K562 (cell line): ENCODE measurements at regions of chr3 and their contacts with region 1.

Region 1: DNA sequence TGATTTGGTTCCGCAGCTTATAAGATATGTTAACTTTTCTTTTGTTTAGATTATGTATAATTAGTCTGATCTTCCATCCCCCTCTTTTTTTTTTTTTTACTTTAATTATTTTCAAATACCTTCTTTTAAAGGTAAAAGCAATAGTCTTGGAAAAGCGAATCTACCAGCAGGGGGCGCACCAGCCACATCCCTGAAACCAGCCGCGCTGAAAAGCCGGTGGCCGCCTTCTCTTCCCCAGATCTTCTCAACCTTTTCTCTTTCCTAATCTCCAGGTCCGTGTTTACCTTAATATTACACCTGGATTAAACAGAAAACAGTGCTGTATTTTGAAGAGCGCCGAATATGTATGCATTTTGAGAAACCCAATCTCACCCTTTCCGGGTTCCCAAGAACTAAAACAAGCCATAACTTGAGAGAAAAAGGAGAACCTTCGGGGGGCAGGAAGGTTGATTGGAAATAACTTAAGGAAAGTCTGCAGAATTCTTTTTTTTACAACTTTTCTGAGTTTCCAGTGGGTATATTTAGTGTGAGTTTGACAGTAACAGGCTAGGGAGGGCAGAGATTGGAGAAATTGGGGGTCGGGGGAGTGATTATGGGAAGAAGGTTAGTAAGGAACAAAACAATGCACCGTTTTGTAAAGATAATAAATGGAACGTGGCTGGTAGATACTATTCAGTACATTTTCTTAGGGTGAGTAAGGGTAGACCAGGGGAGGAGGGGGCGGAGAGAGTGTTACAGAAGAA is 2.0 kb upstream of the SOX2 start:
- DNase-seq: peak; percentile 51 to 72 (median 56)
- ATAC-seq: peak; percentile 82
- H3K4me3 ChIP-seq: no peak overlapping the region
- H3K27ac ChIP-seq: no peak overlapping the region
- H3K4me1 ChIP-seq: peaks cover 0 to 4% of the 10 kb centered on the region in 2 experiments; a peak in 2 of 5 replicates
- H3K27me3 ChIP-seq: peaks cover 2 to 16% of the 10 kb centered on the region in 2 experiments; a peak in 3 of 5 replicates
- CTCF ChIP-seq: peak; percentile 60 to 77 (median 67)
- EP300 ChIP-seq: no peak
- POLR2A ChIP-seq: no peak
- RAD21 ChIP-seq: peak; percentile 70 to 79

Region 2: GRCh38 chr3:181899702-181900101 is 190.0 kb after region 1 on chr3:
- CTCF ChIA-PET with region 1: no interaction called
- POLR2A ChIA-PET with region 1: no interaction called
- in situ Hi-C with region 1: no loop called
- intact Hi-C with region 1: loop called (anchors 1 kb)
- DNase-seq: peak in 1 of 4 experiments; percentile 1
- ATAC-seq: no peak
- H3K4me3 ChIP-seq: no peak overlapping the region
- H3K27ac ChIP-seq: no peak overlapping the region
- H3K4me1 ChIP-seq: no peaks in the 10 kb centered on the region; a peak in 1 of 5 replicates
- H3K27me3 ChIP-seq: no peaks in the 10 kb centered on the region
- CTCF ChIP-seq: no peak
- EP300 ChIP-seq: no peak
- POLR2A ChIP-seq: no peak
- RAD21 ChIP-seq: no peak

Region 3: GRCh38 chr3:182258538-182259177 is 549.0 kb after region 1 on chr3:
- CTCF ChIA-PET with region 1: no interaction called
- POLR2A ChIA-PET with region 1: no interaction called
- in situ Hi-C with region 1: no loop called
- intact Hi-C with region 1: loop called (anchors 2 kb)
- DNase-seq: peak in 1 of 4 experiments; percentile 29
- ATAC-seq: 0 out of 3 replicates have a peak, but pooled peaks have one; percentile 49
- H3K4me3 ChIP-seq: no peak overlapping the region
- H3K27ac ChIP-seq: no peak overlapping the region
- H3K4me1 ChIP-seq: peaks cover 0 to 3% of the 10 kb centered on the region in 2 experiments; a peak in 1 of 5 replicates
- H3K27me3 ChIP-seq: no peaks in the 10 kb centered on the region
- CTCF ChIP-seq: peak in 2 of 3 experiments; percentile 22 to 57; a peak in 2 of 6 replicates
- EP300 ChIP-seq: no peak
- POLR2A ChIP-seq: no peak
- RAD21 ChIP-seq: peak; percentile 70